Mammary epithelial cell (primary cell): ENCODE measurements at regions of chr1 and their contacts with region 1.

Region 1: DNA sequence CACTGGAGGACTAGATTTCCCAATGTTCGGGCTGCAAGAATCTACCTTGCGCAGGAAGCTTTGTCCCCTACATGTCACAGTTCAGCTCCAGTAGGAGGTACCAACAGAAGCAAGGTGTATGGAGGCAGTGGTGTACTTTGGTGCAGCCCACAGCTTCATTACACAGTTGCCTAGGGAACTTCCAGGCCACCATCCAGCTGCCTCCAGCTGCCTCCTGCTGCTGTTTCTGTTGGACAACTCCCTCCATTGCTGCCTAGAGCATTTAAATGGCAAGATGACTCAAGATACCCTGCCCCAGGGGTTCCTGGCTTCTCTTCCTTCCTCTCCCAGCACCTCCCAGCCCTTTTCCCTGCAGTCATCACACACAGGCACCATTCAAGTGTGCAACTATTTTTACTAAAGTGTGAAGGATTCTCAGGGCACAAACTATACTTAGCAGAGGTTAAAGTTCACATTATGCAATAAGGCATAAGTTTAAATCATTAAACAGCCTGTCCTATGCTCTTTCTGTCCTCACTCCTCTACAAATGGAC is 39.0 kb upstream of the ATP1A1 start:
- DNase-seq: peak; percentile 72
- H3K4me3 ChIP-seq: no peak overlapping the region
- H3K27ac ChIP-seq: no peak overlapping the region
- H3K4me1 ChIP-seq: peaks cover 8% of the 10 kb centered on the region
- H3K27me3 ChIP-seq: no peaks in the 10 kb centered on the region
- CTCF ChIP-seq: no peak

Region 2: DNA sequence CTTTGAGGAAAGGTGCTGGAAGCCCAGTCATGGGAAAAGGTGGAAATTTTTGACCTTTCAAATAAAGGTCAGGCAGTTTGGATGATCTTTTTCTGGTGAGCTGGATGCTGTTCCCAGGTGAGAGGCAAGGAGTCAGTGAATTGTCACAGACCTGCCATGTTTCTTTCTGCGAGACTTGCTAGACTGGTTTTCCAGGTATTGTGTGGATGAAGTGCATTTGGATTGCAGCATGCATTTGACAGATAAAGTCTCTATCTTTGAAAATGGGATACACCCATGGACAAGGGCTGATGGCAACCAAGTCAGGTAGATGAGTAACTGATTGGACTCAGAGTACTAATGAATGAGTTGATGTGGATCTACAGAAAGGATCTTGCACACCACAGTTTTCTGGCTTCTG is 427.4 kb before region 1 on chr1:
- CTCF ChIA-PET with region 1: no interaction called
- dilution Hi-C with region 1: no loop called
- in situ Hi-C with region 1: no loop called
- intact Hi-C with region 1: no loop called
- DNase-seq: peak; percentile 45
- H3K4me3 ChIP-seq: no peak overlapping the region
- H3K27ac ChIP-seq: no peak overlapping the region
- H3K4me1 ChIP-seq: no peaks in the 10 kb centered on the region
- H3K27me3 ChIP-seq: no peaks in the 10 kb centered on the region
- CTCF ChIP-seq: no peak

Region 3: DNA sequence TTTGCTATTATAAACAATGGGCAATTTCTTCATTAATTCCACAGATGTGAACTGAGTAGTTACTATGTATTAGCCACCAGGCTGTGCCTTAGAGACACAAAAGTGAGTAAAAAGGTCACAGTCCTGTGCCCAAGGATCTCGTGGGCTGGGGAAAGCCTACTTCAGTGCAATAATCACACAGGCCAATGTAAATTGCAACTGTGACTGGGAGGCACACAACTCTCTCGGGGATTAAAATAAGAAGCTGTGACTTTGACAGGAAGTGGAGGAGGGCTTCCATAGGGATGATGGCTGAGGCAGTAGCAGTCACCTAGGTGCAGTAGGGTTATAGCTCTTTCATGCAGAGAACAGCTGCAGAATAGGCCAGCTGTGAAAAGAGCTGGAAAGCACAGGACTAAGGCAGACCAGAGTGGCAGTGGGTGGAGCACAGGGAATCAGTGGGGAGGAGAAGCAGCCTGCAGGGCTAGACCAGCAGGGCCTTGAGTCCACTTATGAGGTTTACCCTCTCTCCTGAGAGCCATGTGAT is 101.0 kb before region 1 on chr1:
- CTCF ChIA-PET with region 1: no interaction called
- dilution Hi-C with region 1: loop called (anchors 25 kb)
- in situ Hi-C with region 1: loop called in 1 of 2 experiments (anchors 25 kb)
- intact Hi-C with region 1: no loop called
- DNase-seq: no peak
- H3K4me3 ChIP-seq: no peak overlapping the region
- H3K27ac ChIP-seq: no peak overlapping the region
- H3K4me1 ChIP-seq: no peaks in the 10 kb centered on the region
- H3K27me3 ChIP-seq: no peaks in the 10 kb centered on the region
- CTCF ChIP-seq: peak in 1 of 2 donors; percentile 23

Region 4: DNA sequence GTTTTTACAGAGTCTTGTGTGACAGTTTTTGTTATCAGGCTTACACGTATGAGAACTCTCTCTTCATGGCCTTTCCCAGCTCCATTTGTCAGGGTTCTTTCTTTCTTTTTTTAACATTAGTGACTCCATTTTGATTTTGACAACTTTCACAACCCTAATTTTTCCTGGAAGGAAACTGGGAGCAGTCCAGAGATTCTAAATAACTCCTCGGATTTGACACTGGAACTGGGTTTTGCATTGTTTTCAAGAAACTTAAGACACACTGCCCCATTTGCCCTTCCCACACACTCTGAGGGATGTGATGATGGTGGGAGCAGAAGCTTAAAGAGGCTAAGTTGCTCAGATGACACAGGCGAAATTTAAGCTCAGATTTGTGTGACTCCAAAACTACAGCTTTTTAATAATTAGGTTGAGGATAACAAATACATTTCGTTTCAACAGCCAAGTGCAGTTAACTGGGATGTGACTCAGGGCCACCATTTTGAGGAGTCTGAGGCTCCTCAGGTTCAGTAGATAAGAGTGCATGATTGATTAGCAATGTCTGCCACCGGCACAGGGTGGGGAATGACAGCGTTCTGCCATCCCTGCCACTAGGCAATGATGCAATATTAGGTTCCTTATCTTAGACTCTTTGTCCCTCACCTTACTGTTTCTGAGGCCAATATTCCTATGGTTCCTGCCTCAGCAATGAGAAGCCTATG is 56.1 kb before region 1 on chr1:
- CTCF ChIA-PET with region 1: no interaction called
- dilution Hi-C with region 1: no loop called
- in situ Hi-C with region 1: no loop called
- intact Hi-C with region 1: no loop called
- DNase-seq: no peak
- H3K4me3 ChIP-seq: no peak overlapping the region
- H3K27ac ChIP-seq: no peak overlapping the region
- H3K4me1 ChIP-seq: peaks cover 19% of the 10 kb centered on the region
- H3K27me3 ChIP-seq: no peaks in the 10 kb centered on the region
- CTCF ChIP-seq: no peak